ENCODE measurements at regions of chr11 and their contacts with region 1.

Region 1: GRCh38 chr11:126459691-126460281 is 104.3 kb downstream of the ST3GAL4 start:
- DNase-seq: no peak
- H3K4me3 Mint-ChIP-seq: no peak overlapping the region
- H3K27ac Mint-ChIP-seq: no peak overlapping the region
- H3K4me1 Mint-ChIP-seq: peaks cover 7% of the 10 kb centered on the region
- H3K27me3 Mint-ChIP-seq: no peaks in the 10 kb centered on the region

Region 2: DNA sequence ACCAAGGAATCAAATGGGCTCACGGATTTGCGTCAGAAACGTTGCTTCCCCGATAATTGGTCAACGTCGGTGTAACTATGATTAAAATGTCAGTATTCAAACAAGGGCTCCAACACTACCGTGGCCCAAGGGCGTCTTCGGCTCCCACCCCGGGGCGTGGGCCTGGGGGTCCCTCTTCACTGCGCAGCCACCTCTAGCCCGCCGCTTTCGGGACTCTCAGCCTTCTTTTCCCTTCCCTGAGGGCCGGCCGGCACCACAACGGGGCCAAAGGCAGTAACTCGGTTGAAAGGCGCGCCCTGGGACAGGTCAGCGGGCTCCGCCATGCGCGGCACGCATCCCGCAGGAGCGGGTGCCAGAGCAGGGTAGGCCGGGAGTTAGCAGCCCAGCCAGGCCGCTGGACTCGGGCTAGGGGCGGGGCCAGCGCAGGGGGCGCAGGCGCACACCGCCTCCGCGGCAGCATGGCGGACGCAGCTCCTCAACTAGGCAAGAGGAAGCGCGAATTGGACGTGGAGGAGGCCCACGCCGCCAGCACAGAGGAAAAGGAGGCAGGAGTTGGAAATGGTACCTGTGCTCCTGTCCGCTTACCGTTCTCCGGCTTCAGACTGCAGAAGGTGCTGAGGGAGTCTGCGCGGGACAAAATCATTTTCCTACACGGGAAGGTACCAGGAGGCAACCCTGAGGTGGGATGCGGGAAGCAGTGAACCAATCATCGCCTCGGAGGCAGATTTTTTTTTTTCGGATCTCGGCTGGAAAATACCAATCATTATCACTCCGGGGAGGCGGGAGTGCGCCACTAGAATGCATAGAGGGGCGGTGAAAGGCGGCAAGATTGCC is 155.9 kb before region 1 on chr11 and contains the start of gene DCPS:
- intact Hi-C with region 1: no loop called
- DNase-seq: peak; percentile 88
- H3K4me3 Mint-ChIP-seq: peak within 1 kb of the TSS; percentile 98
- H3K27ac Mint-ChIP-seq: peak within 1 kb of the TSS; percentile 98
- H3K4me1 Mint-ChIP-seq: peaks cover 35% of the 10 kb centered on the region
- H3K27me3 Mint-ChIP-seq: no peaks in the 10 kb centered on the region
- total RNA-seq, gene DCPS: 40.4 and 40.5 TPM in 2 replicates

Region 3: DNA sequence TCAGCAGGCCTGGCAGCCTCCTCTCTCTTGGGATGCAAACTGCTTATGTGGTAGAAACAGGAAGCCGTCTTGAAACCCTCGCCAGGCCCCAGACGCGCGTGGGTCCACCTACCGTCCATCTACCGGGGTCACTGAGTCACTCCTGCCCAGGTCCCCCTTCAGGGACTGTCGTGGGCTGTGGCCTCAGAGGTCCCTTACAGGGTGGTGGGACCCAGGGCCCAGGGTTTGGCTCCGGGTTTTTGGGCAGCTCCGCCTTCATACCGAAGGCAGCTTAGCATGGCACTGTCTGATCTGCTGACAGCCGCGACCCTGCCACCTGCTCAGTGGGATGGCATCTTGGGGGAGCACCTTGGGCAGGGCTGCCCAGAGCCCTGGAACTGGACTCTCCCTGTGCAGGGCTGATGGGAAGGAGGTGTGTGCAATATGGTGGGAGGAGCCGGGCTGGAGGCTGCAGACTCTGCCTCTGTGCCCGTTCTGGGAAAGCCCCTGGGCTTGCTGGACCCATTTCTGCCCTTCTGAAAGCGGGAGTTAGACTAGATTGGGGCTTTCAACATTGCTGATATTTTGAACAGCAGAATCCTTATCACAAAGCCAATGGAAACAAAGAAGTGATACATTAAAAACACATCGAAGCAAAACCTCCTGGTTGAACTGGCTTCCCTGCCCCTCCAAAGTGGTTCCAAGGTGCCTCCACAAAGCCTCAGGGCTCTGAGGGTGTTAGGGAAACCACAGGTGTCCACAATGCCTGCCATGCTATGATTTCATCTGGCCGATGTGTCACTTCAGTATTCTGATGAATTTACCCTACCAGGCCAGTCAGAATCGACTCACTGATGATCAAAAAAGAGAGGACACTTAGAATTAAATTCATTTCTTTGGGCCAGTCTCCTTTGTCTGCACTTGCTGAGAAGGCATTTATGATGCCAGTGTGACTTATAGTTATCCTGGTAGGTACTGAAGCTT is 224.3 kb after region 1 on chr11:
- intact Hi-C with region 1: no loop called
- DNase-seq: no peak
- H3K4me3 Mint-ChIP-seq: no peak overlapping the region
- H3K27ac Mint-ChIP-seq: no peak overlapping the region
- H3K4me1 Mint-ChIP-seq: no peaks in the 10 kb centered on the region
- H3K27me3 Mint-ChIP-seq: peaks cover 2% of the 10 kb centered on the region

Region 4: GRCh38 chr11:126917531-126918204 is 457.9 kb after region 1 on chr11:
- intact Hi-C with region 1: no loop called
- DNase-seq: no peak
- H3K4me3 Mint-ChIP-seq: no peak overlapping the region
- H3K27ac Mint-ChIP-seq: no peak overlapping the region
- H3K4me1 Mint-ChIP-seq: no peaks in the 10 kb centered on the region
- H3K27me3 Mint-ChIP-seq: no peaks in the 10 kb centered on the region

Region 5: GRCh38 chr11:128238521-128239265 is 1778.9 kb after region 1 on chr11:
- intact Hi-C with region 1: loop called (anchors 5 kb)
- DNase-seq: no peak
- H3K4me3 Mint-ChIP-seq: peak overlapping the region; percentile 0
- H3K27ac Mint-ChIP-seq: peak overlapping the region; percentile 47
- H3K4me1 Mint-ChIP-seq: peaks cover 35% of the 10 kb centered on the region
- H3K27me3 Mint-ChIP-seq: peaks cover 2% of the 10 kb centered on the region

Measured in activated T-helper 1 cell treated with anti-CD3 and anti-CD28 coated beads, Interleukin-12 subunit alpha, Interleukin-12 subunit beta, Interleukin-2, Interleukin-4 antibody, amounts not matched to agents 30 ng/mL and 10 ng/mL and 1 ng/mL, durations not matched to agents 14 hours and 24 hours and 36 hours (primary cell).